WTC11 (cell line): ENCODE measurements at regions of chr12 and their contacts with region 1.

Region 1: DNA sequence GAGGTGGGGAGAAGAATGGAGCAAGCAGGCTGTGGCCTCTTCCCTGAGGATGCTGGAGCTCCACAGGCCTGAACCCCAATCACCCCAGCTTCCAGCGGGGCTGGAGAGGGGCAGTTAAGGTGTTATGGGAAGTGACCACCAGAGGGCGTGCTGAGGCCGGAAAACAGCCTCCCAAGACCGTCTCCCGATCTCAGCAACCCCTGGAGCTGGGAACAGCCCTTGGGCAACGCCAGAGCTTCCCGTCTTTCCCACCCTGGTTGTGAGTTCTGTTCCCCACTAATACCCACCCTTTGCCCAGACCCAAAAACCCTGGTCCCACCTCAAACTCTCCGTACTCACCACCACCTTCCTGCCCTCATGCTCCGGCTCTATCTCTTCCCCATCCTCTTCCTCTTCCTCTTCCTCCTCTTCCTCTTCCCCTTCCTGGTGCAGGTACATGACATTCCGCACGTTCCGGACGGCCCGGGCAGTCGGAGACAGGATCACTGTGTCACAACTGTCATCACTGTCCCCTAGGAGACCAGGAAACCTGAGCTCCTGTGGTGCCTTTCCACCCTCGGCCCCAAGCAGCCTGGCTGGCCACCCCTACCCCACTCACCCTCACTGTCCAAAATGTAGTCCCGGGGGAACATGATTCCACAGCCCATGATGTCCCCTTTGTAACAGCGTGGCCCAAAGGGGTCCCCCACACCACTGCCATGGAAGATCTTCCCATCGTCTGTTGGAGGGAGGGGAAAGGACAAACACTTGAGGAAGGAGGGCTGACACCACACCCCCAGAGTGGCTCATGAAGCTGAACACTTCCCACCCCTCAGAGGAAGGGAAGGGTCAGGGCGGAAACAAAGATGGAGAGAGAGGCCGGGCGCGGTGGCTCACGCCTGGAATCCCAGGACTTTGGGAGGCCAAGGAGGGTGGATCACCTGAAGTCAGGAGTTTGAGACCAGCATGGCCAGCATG is 12.9 kb downstream of the SPRYD3 start:
- DNase-seq: peak; percentile 87
- ATAC-seq: peak; percentile 73
- H3K4me3 Mint-ChIP-seq: no peak overlapping the region
- H3K27ac Mint-ChIP-seq: no peak overlapping the region
- H3K4me1 Mint-ChIP-seq: peaks cover 23% of the 10 kb centered on the region
- H3K27me3 Mint-ChIP-seq: peaks cover 21% of the 10 kb centered on the region
- CTCF ChIP-seq: peak; percentile 96

Region 2: GRCh38 chr12:53031617-53032016 is 34.6 kb before region 1 on chr12:
- CTCF ChIA-PET with region 1: no interaction called
- POLR2A ChIA-PET with region 1: no interaction called
- DNase-seq: no peak
- ATAC-seq: no peak
- H3K4me3 Mint-ChIP-seq: no peak overlapping the region
- H3K27ac Mint-ChIP-seq: no peak overlapping the region
- H3K4me1 Mint-ChIP-seq: no peaks in the 10 kb centered on the region
- H3K27me3 Mint-ChIP-seq: no peaks in the 10 kb centered on the region
- CTCF ChIP-seq: no peak

Region 3: DNA sequence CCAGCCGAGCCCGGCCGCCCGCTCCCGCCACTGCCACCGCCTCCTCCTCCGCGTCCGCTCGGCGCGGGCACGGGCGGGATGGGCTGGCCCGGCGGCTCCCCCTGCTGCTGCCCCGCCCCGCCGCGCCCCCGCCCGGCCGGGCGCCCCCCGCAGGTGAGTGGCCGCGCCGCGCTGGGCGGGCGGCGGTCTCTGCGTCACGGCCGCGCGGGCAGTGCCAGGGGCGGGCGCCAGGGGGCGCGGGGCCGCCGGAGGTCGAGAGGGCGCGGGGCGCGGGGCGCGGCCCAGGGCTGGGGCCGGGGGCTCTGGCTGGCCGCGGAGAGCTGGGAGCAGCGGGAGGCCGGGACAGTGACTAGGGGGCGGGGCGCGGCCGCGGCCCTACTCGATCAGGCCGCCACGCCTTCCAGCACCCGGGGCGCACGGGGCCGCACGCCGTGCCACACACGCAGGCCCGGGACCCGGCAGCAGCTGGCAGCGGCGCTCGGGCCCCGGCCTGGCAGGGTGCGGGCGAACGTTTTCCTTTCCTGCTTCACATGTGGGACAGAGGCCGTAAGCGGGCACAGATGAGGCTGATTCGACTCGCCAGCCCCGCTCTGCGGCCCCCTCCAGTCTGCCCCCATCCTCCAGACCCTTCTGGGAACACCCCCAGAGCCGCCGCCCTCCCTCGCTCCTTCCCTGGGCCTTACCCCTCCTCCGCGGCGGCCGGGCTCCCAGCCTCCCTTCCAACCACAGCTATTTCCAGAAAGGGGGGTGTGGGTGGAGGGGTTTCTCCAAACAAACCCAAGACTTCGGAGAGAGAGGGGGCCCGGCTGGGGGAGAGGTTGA is 18.8 kb before region 1 on chr12:
- CTCF ChIA-PET with region 1: interaction called, 97 read pairs
- POLR2A ChIA-PET with region 1: no interaction called
- DNase-seq: peak; percentile 81
- ATAC-seq: peak; percentile 27
- H3K4me3 Mint-ChIP-seq: peak overlapping the region; percentile 62
- H3K27ac Mint-ChIP-seq: no peak overlapping the region
- H3K4me1 Mint-ChIP-seq: peaks cover 80% of the 10 kb centered on the region
- H3K27me3 Mint-ChIP-seq: peaks cover 40% of the 10 kb centered on the region
- CTCF ChIP-seq: peak; percentile 41; the same call in 1 of the 2 replicates

Region 4: DNA sequence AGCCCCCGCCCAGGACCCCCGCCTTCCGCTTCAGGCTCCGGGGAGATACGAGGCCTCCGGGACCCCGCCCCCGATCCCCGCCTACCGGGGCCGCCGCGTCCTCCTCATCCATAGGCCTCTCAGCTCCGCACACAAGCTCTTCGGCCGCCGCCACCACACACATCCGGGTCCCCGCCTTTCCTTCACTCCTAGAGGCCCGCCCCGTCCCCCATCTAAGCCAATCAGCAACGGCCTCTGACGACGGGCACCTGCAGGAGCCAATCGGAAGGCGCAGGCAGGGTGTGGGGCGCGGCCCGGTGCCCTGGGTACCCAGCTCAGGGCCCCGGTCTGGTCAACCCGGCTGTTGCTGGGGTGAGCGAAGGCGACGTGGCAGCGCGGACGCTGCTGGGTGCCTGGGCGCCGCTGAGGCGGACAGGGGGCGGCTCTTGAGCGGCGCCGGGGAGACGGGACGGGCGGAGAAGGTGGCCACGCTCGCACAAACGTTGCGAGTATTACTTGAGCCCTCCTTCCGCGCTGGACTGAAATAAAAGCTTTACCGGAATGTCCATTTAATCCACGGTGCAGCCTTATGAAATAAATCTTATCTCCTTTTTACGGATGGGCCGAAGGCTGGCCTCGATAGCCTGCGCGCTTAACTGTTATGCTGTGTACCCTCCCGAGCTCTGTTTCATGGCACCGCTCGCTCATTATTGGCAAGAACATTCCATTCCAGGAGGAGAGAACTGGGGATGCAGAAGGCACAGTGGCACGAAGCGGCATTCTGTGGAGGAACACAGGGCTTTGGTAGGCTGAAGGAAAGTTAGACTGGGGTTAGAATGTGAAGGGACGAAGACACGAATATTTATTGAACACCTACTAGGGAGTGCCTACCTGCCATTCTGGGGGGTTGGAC is 13.2 kb after region 1 on chr12 and contains the start of gene SPRYD3:
- CTCF ChIA-PET with region 1: interaction called, 80 read pairs
- POLR2A ChIA-PET with region 1: interaction called, 5 read pairs
- DNase-seq: peak; percentile 98
- ATAC-seq: peak; percentile 95
- H3K4me3 Mint-ChIP-seq: peak within 1 kb of the TSS; percentile 85
- H3K27ac Mint-ChIP-seq: peak within 1 kb of the TSS; percentile 95
- H3K4me1 Mint-ChIP-seq: peaks cover 13% of the 10 kb centered on the region
- H3K27me3 Mint-ChIP-seq: peaks cover 43% of the 10 kb centered on the region
- CTCF ChIP-seq: no peak
- total RNA-seq, gene SPRYD3: 6.5 to 11.9 TPM (median 6.8 TPM) in 3 replicates

Region 5: DNA sequence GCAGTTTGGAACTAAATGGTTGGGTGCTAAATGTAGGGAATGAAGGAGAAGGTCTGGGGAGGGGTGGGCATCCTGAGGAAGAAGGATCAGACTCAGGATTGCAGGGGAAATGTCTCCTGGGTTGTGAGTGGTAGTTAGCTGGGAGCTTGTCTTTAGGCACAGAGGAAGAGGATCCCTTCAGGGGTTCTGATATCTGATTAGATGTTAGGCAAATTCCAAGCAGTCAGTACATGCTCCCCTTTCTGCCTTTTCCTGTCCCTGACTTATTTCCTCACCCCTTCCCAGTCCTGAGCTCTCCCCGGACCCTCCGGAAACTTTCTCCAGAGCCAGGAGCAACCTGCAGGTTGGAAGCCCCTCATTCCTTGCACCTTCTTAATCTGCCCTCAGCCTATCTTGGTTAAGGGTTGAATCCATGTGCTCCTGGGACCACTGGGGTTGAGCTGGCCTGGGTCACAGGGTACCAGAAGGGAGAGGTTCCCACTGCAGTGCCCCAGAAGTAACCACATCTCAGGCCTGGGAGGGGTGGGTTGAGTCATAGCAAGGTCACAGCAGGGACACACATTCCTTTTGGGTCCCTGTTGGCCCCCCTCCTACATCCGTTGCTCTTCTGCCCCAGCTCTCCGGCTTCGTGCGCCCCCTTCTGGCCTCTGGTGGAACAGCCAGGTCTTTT is 32.9 kb after region 1 on chr12:
- CTCF ChIA-PET with region 1: interaction called, 474 read pairs
- POLR2A ChIA-PET with region 1: interaction called, 6 read pairs
- DNase-seq: peak; percentile 92
- ATAC-seq: peak; percentile 16
- H3K4me3 Mint-ChIP-seq: peak overlapping the region; percentile 90
- H3K27ac Mint-ChIP-seq: no peak overlapping the region
- H3K4me1 Mint-ChIP-seq: peaks cover 30% of the 10 kb centered on the region
- H3K27me3 Mint-ChIP-seq: peaks cover 54% of the 10 kb centered on the region
- CTCF ChIP-seq: peak; percentile 96

Region 6: GRCh38 chr12:53145383-53146260 is 79.4 kb after region 1 on chr12:
- CTCF ChIA-PET with region 1: interaction called, 10 read pairs
- POLR2A ChIA-PET with region 1: no interaction called
- DNase-seq: no peak
- ATAC-seq: no peak
- H3K4me3 Mint-ChIP-seq: no peak overlapping the region
- H3K27ac Mint-ChIP-seq: no peak overlapping the region
- H3K4me1 Mint-ChIP-seq: peaks cover 3% of the 10 kb centered on the region; the same call in 1 of the 2 replicates
- H3K27me3 Mint-ChIP-seq: peaks cover 15% of the 10 kb centered on the region
- CTCF ChIP-seq: no peak

Region 7: DNA sequence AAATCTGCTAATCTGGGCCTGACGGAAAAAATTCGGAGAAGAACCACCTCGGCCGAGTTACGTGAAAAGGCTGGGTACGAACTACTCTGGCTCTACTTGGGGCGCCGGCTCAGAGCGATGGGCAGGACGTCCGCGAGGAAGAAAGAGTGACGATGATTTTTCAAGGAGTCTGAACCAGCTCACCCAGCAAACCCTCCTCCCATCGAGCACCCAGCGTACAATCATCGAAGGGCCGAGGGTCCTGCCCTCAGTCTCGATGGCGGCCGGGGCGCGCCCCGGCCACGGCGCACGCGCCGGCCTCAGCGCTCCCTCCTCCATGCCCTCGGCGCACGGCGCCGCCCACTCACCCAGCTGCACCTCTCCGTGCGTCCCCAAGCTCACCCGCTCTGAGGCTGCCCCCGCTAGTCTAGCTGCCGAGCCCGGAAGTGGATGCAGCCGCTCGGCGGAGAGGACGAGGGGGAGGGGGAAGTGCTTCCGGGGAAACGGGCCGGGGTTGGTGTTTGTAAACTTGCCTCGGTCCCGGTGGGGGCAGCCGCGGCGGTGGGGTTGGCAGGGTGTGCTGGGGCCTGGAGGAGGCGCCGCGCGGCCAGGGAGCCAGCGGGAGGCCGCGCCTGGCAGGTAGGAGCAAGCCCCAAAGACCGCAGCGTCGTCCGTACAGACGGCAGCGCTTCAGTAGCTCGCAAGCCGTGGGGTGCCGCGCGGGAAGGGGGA is 114.1 kb after region 1 on chr12 and contains the starts of genes CSAD and ZNF740:
- CTCF ChIA-PET with region 1: interaction called, 23 read pairs
- POLR2A ChIA-PET with region 1: no interaction called
- DNase-seq: peak; percentile 96
- ATAC-seq: peak; percentile 97
- H3K4me3 Mint-ChIP-seq: peak within 1 kb of the TSS; percentile 91
- H3K27ac Mint-ChIP-seq: peak within 1 kb of the TSS; percentile 93
- H3K4me1 Mint-ChIP-seq: peaks cover 24% of the 10 kb centered on the region
- H3K27me3 Mint-ChIP-seq: peaks cover 48% of the 10 kb centered on the region
- CTCF ChIP-seq: no peak
- total RNA-seq, gene CSAD: 11.5 to 12.6 TPM (median 12.3 TPM) in 3 replicates
- total RNA-seq, gene ZNF740: 26.6 to 36.6 TPM (median 36.1 TPM) in 3 replicates

Region 8: GRCh38 chr12:53213348-53213747 is 147.1 kb after region 1 on chr12:
- CTCF ChIA-PET with region 1: interaction called, 15 read pairs
- POLR2A ChIA-PET with region 1: no interaction called
- DNase-seq: peak; percentile 93
- ATAC-seq: peak; percentile 59
- H3K4me3 Mint-ChIP-seq: 0 out of 2 replicates have a peak overlapping the region, but pooled peaks have one; percentile 2
- H3K27ac Mint-ChIP-seq: peak overlapping the region; percentile 63; the same call in 1 of the 2 replicates
- H3K4me1 Mint-ChIP-seq: peaks cover 57% of the 10 kb centered on the region
- H3K27me3 Mint-ChIP-seq: no peaks in the 10 kb centered on the region
- CTCF ChIP-seq: peak; percentile 97